Heart right ventricle (tissue), 16 donors: ENCODE measurements at regions of chr6 and their contacts with region 1.

Region 1: DNA sequence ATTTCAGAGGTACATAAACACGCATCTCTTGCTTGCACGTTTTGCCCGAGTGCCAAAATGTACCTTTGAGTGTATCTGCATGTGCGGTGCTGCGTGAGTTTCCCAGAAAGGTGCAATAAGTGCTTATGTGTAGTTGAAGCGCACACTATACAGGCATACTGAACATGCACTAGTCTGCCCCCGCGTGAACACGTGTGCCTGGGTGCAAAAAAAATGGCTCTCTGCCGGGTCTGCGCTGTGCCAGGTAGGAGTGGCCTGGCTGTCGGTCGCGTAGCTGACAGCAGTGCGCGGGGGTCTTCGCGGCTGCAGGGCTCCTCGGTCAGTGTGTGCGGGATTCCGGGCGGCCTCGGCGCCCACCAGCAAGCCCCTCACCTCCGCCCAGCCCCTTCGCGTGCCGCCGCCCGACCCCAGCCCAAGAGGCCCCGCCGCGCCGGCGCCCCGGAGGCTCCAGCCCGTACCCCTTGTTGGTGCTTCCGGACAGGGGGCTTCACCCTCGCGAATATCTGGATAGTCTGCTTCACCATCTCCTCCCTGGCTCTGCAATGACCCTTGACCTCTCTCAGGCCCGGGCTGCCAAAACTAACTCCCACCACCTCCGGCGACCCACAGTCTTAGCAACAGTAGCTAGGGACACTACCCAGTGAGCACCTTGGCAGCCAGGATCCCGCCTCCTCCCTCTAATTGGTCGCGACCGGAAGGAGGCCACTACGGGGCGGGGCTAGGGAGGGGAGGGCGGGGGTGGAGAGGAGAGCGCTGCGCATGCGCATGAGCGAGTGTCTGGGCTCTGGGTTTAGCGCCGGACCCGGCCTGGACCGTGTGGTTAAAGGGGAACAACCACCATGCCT is at the start of gene KIF6:
- DNase-seq: peak; percentile 90 to 93
- ATAC-seq: peak; percentile 99 to 100 (median 100)
- H3K4me3 ChIP-seq: peak within 1 kb of the TSS; percentile 55 to 89 (median 78)
- H3K27ac ChIP-seq: peak within 1 kb of the TSS in 4 of 10 donors; percentile 47 to 75 (median 64)
- H3K4me1 ChIP-seq: peaks cover 0 to 7% (median 0%) of the 10 kb centered on the region in 9 donors
- H3K27me3 ChIP-seq: no peaks in the 10 kb centered on the region
- CTCF ChIP-seq: peak in 1 of 9 donors; percentile 28
- total RNA-seq, gene KIF6: 0.28 to 1.6 (median 0.45) TPM in 9 of 10 donors, not detected in the other

Region 2: DNA sequence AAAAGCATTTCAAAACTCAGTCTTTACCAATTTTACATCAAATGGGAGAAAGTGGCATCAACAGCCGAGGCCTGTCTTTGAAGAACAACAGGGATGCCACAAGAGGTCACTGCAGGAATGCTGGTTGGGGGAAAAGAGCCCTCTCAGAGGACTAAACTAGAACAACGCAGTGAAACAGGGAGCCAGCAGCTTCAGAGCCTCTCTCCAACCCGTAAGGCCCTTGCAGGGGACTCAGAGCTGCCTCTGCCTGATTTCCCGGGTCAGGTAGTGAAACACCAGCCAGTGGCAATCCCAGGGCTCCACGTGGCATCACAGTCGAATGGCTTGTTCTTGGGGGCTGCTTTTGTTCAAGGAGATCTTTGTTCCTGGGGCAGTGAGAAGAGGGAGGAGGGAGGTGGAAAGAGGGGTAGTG is 347.5 kb before region 1 on chr6:
- intact Hi-C with region 1: loop called in 1 of 10 experiments (anchors 10 kb)
- DNase-seq: peak; percentile 25 to 71
- ATAC-seq: peak; percentile 78 to 90 (median 88)
- H3K4me3 ChIP-seq: no peak overlapping the region
- H3K27ac ChIP-seq: no peak overlapping the region
- H3K4me1 ChIP-seq: peaks cover 0 to 14% (median 0%) of the 10 kb centered on the region in 9 donors
- H3K27me3 ChIP-seq: no peaks in the 10 kb centered on the region
- CTCF ChIP-seq: peak; percentile 41 to 80 (median 70)

Region 3: GRCh38 chr6:39543095-39543494 is 181.9 kb before region 1 on chr6:
- intact Hi-C with region 1: no loop called
- DNase-seq: peak; percentile 28 to 53
- ATAC-seq: peak; percentile 83 to 98 (median 94)
- H3K4me3 ChIP-seq: no peak overlapping the region
- H3K27ac ChIP-seq: peak overlapping the region in 1 of 10 donors; percentile 38
- H3K4me1 ChIP-seq: peaks cover 0 to 33% (median 14%) of the 10 kb centered on the region in 9 donors
- H3K27me3 ChIP-seq: no peaks in the 10 kb centered on the region
- CTCF ChIP-seq: no peak

Region 4: GRCh38 chr6:39785281-39785680 is 60.3 kb after region 1 on chr6:
- intact Hi-C with region 1: loop called in 1 of 10 experiments (anchors 5 kb)
- DNase-seq: no peak
- ATAC-seq: no peak
- H3K4me3 ChIP-seq: no peak overlapping the region
- H3K27ac ChIP-seq: no peak overlapping the region
- H3K4me1 ChIP-seq: no peaks in the 10 kb centered on the region
- H3K27me3 ChIP-seq: no peaks in the 10 kb centered on the region
- CTCF ChIP-seq: no peak